Lower leg skin (tissue), 4 donors: ENCODE measurements at regions of chr1 and their contacts with region 1.

Region 1: DNA sequence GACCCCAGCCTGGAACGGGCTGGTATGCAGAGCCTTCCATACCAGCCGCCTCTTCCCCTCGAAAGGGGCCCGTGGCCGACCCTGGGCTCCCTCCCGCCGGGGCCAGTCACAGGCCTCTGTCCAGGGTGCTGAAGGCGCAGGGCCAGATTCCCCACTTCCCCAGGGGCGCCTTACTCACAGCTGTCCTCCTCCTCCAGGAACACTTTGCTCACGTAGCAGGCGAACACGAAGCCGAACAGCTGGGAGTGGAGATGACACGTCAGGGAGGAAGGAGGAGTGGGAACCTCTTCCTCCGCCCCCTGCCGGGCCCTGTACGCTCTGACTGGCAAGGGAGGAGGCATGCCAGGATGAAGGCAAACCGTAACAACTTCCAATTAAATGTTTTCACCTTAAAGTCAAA is 57.3 kb downstream of the NKAIN1 start:
- DNase-seq: peak; percentile 60 to 91
- H3K4me3 ChIP-seq: no peak overlapping the region
- CTCF ChIP-seq: no peak
- POLR2A ChIP-seq: no peak

Region 2: GRCh38 chr1:30840904-30841598 is 341.3 kb before region 1 on chr1:
- intact Hi-C with region 1: no loop called
- DNase-seq: peak in 1 of 2 donors; percentile 22
- H3K4me3 ChIP-seq: no peak overlapping the region
- CTCF ChIP-seq: no peak
- POLR2A ChIP-seq: no peak

Region 3: GRCh38 chr1:31038360-31038759 is 144.0 kb before region 1 on chr1:
- intact Hi-C with region 1: no loop called
- DNase-seq: no peak
- H3K4me3 ChIP-seq: no peak overlapping the region
- CTCF ChIP-seq: no peak
- POLR2A ChIP-seq: no peak

Region 4: GRCh38 chr1:31335007-31335406 is 152.7 kb after region 1 on chr1:
- intact Hi-C with region 1: loop called (anchors 10 kb)
- DNase-seq: no peak
- H3K4me3 ChIP-seq: no peak overlapping the region
- CTCF ChIP-seq: no peak
- POLR2A ChIP-seq: no peak

Region 5: DNA sequence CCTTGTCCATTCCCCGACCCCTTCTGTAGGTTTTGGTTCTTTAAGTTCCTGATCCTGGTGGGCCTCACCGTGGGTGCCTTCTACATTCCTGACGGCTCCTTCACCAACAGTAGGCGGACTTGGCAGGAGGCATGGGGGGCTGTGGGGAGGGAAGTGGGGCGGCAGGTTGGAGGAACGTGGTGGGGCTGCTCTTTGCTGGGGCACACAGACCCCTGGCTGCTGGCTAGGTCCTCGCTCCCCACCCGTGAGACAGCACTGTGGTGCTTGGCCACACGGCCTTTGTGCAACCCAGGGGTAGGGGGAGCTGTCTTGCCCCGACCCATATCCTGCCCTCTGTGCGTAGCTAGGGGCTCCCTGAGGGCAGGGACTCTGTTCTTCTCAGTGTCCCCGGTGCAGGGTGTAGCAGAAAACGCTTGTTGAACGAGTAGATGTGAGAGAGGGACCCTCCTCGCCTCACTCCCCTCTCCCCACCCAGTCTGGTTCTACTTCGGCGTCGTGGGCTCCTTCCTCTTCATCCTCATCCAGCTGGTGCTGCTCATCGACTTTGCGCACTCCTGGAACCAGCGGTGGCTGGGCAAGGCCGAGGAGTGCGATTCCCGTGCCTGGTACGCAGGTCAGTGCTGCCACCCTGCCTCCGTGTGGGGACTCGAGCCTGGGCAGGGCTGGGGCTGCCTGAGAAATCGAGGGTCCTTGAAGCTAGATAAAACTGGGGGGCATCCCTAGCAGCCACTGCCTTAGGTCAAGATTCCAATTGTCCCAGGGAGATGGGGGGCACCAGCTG is 243.1 kb after region 1 on chr1:
- intact Hi-C with region 1: loop called (anchors 2 kb)
- DNase-seq: no peak
- H3K4me3 ChIP-seq: no peak overlapping the region
- CTCF ChIP-seq: no peak
- POLR2A ChIP-seq: no peak

Region 6: GRCh38 chr1:31548907-31549808 is 366.8 kb after region 1 on chr1:
- intact Hi-C with region 1: loop called (anchors 5 kb)
- DNase-seq: peak; percentile 88 to 97
- H3K4me3 ChIP-seq: no peak overlapping the region
- CTCF ChIP-seq: peak in 1 of 3 donors; percentile 88
- POLR2A ChIP-seq: no peak